ENCODE measurements at regions of chr7 and their contacts with region 1.

Region 1: GRCh38 chr7:71343039-71343438 is 211.1 kb downstream of the GALNT17 start:
- DNase-seq: no peak
- ATAC-seq: no peak
- H3K4me3 ChIP-seq: no peak overlapping the region
- H3K27ac ChIP-seq: no peak overlapping the region
- H3K4me1 ChIP-seq: no peaks in the 10 kb centered on the region
- H3K27me3 ChIP-seq: no peaks in the 10 kb centered on the region
- CTCF ChIP-seq: no peak

Region 2: GRCh38 chr7:70614237-70615045 is 728.6 kb before region 1 on chr7:
- CTCF ChIA-PET with region 1: no interaction called
- POLR2A ChIA-PET with region 1: no interaction called
- in situ Hi-C with region 1: no loop called
- intact Hi-C with region 1: no loop called
- DNase-seq: no peak
- ATAC-seq: no peak
- H3K4me3 ChIP-seq: no peak overlapping the region
- H3K27ac ChIP-seq: no peak overlapping the region
- H3K4me1 ChIP-seq: no peaks in the 10 kb centered on the region
- H3K27me3 ChIP-seq: no peaks in the 10 kb centered on the region
- CTCF ChIP-seq: no peak

Region 3: DNA sequence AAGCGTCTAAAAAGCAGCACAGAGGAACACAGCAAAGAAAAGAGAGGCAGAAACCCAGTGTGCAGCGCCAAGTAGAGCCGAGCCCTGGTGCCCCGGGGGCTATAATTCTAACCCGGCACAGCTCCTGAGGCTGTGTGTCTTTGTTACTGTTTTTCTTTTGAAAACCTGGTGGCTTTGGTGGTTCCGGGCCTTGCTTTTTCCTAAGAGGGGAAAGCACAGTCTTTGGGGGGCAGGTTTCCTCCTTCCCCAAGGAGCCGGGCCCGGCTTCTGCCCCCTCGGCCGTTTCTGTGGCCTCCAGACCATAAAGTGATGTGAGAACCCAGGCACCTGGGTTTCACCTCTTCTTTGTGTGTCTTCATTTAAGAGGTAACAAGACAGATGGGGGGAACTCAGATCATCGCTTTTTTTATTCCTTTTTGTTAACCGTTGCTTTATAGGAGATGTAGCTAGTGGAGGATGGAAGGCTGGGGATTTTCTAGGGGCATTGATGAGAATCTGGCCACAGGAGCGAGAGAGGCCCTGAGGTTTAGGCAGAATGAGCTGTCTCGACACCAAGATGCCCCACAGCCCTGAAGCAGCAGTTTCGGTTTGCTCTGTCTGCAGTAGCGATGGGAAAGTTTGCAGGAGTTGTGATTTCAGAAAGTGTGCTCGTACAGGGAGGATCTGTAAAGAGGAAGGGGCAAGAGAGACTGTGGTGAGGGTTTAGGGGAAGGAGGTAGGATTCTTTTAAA is 578.9 kb before region 1 on chr7:
- CTCF ChIA-PET with region 1: no interaction called
- POLR2A ChIA-PET with region 1: interaction called, 13 read pairs
- in situ Hi-C with region 1: no loop called
- intact Hi-C with region 1: no loop called
- DNase-seq: no peak
- ATAC-seq: no peak
- H3K4me3 ChIP-seq: no peak overlapping the region; a peak in 1 of 4 replicates
- H3K27ac ChIP-seq: no peak overlapping the region
- H3K4me1 ChIP-seq: no peaks in the 10 kb centered on the region
- H3K27me3 ChIP-seq: no peaks in the 10 kb centered on the region
- CTCF ChIP-seq: no peak

Region 4: GRCh38 chr7:71329030-71329660 is 13.9 kb before region 1 on chr7:
- CTCF ChIA-PET with region 1: no interaction called
- POLR2A ChIA-PET with region 1: no interaction called
- in situ Hi-C with region 1: no loop called
- intact Hi-C with region 1: no loop called
- DNase-seq: no peak
- ATAC-seq: no peak
- H3K4me3 ChIP-seq: no peak overlapping the region
- H3K27ac ChIP-seq: no peak overlapping the region
- H3K4me1 ChIP-seq: no peaks in the 10 kb centered on the region
- H3K27me3 ChIP-seq: no peaks in the 10 kb centered on the region
- CTCF ChIP-seq: no peak